CD8-positive, alpha-beta T cell (primary cell): ENCODE measurements at regions of chr2 and their contacts with region 1.

Region 1: GRCh38 chr2:218238887-218239286 is 21.9 kb downstream of the ARPC2 start:
- DNase-seq: no peak
- ATAC-seq: no peak
- H3K4me3 ChIP-seq: no peak overlapping the region
- H3K4me3 Mint-ChIP-seq: no peak overlapping the region
- H3K27ac ChIP-seq: no peak overlapping the region
- H3K27ac Mint-ChIP-seq: no peak overlapping the region
- H3K4me1 ChIP-seq: peaks cover 18% of the 10 kb centered on the region
- H3K4me1 Mint-ChIP-seq: peaks cover 39% of the 10 kb centered on the region
- H3K27me3 ChIP-seq: no peaks in the 10 kb centered on the region
- H3K27me3 Mint-ChIP-seq: no peaks in the 10 kb centered on the region
- CTCF ChIP-seq: no peak

Region 2: GRCh38 chr2:218223046-218223445 is 15.8 kb before region 1 on chr2:
- CTCF ChIA-PET with region 1: interaction called, 9 read pairs
- POLR2A ChIA-PET with region 1: interaction called, 94 read pairs
- intact Hi-C with region 1: loop called in 1 of 2 experiments (anchors 2 kb)
- DNase-seq: peak in 5 of 9 experiments; percentile 27 to 61 (median 43)
- ATAC-seq: peak; percentile 65
- H3K4me3 ChIP-seq: peak overlapping the region in 1 of 2 experiments; percentile 6
- H3K4me3 Mint-ChIP-seq: peak overlapping the region; percentile 71
- H3K27ac ChIP-seq: peak overlapping the region in 1 of 2 experiments; percentile 99
- H3K27ac Mint-ChIP-seq: peak overlapping the region; percentile 92
- H3K4me1 ChIP-seq: peaks cover 79% of the 10 kb centered on the region
- H3K4me1 Mint-ChIP-seq: peaks cover 88% of the 10 kb centered on the region
- H3K27me3 ChIP-seq: no peaks in the 10 kb centered on the region
- H3K27me3 Mint-ChIP-seq: no peaks in the 10 kb centered on the region
- CTCF ChIP-seq: no peak

Region 3: GRCh38 chr2:219029829-219030165 is 790.9 kb after region 1 on chr2:
- CTCF ChIA-PET with region 1: no interaction called
- POLR2A ChIA-PET with region 1: no interaction called
- intact Hi-C with region 1: no loop called
- DNase-seq: peak; percentile 45 to 83 (median 76)
- ATAC-seq: peak; percentile 94
- H3K4me3 ChIP-seq: no peak overlapping the region
- H3K4me3 Mint-ChIP-seq: no peak overlapping the region
- H3K27ac ChIP-seq: no peak overlapping the region
- H3K27ac Mint-ChIP-seq: no peak overlapping the region
- H3K4me1 ChIP-seq: no peaks in the 10 kb centered on the region
- H3K4me1 Mint-ChIP-seq: no peaks in the 10 kb centered on the region
- H3K27me3 ChIP-seq: peaks cover 0 to 4% of the 10 kb centered on the region in 2 experiments
- H3K27me3 Mint-ChIP-seq: peaks cover 21% of the 10 kb centered on the region
- CTCF ChIP-seq: peak; percentile 87